ENCODE measurements at regions of chr11 and their contacts with region 1.

Region 1: DNA sequence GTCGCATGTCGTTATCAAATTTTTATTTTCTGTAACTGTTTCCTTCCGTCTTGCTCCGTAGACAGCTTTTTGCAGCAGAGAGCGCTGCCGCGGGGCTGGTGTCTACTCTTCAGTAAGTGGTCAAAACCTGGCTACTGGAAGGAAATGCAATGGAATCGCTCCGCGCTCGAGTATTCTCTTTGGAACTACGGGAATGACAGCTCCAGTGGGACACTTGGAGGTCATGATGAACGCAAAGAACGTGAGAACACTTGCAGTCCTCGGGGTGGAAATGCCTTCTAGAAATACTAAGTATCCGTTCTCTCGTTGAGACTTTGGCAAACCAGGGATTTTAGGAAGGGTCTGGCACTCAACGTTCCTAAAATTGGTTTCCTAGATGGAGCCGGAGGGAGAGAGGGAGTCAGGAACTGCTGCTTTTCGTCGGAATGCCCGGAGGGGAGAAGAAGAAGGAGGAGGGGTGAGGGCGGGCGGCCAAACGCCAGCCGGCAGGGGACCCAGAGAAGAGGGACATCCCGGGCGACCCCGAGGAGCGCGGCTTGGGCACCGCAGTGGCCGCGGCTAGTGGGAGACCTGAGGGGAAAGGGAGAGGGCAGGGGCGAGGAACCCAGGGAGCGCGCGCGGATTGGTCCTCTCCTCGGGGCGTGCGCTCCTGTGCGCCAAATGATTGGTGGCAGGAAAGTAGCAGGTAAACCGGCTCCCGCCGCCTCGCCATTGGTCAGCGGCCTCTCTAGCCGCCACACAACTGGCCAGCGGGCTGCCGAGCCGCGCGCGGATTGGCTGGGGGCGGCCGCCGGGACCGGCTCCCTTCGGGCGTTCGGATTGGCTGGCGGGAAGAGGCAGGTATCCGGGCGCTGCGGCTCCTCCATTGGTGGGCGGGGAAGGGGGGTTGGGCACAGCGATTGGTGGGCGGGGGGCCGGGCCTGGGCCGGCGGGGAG is 490 bp upstream of the BMAL1 start:
- DNase-seq: peak; percentile 98 to 99
- H3K4me3 ChIP-seq: peak overlapping the region; percentile 90
- H3K4me3 Mint-ChIP-seq: peak overlapping the region; percentile 89
- H3K27ac Mint-ChIP-seq: no peak overlapping the region
- H3K4me1 ChIP-seq: peaks cover 12% of the 10 kb centered on the region
- H3K4me1 Mint-ChIP-seq: peaks cover 7% of the 10 kb centered on the region
- H3K27me3 ChIP-seq: no peaks in the 10 kb centered on the region; the same call in 1 of the 2 replicates
- H3K27me3 Mint-ChIP-seq: peaks cover 32% of the 10 kb centered on the region
- CTCF ChIP-seq: no peak

Region 2: GRCh38 chr11:13189561-13190426 is 87.3 kb before region 1 on chr11:
- CTCF ChIA-PET with region 1: no interaction called
- POLR2A ChIA-PET with region 1: no interaction called
- intact Hi-C with region 1: no loop called
- DNase-seq: no peak
- H3K4me3 ChIP-seq: no peak overlapping the region
- H3K4me3 Mint-ChIP-seq: no peak overlapping the region
- H3K27ac Mint-ChIP-seq: no peak overlapping the region
- H3K4me1 ChIP-seq: no peaks in the 10 kb centered on the region
- H3K4me1 Mint-ChIP-seq: no peaks in the 10 kb centered on the region
- H3K27me3 ChIP-seq: no peaks in the 10 kb centered on the region
- H3K27me3 Mint-ChIP-seq: peaks cover 2% of the 10 kb centered on the region
- CTCF ChIP-seq: no peak

Region 3: GRCh38 chr11:13259374-13259773 is 17.7 kb before region 1 on chr11:
- CTCF ChIA-PET with region 1: no interaction called
- POLR2A ChIA-PET with region 1: no interaction called
- intact Hi-C with region 1: loop called (anchors 1 kb)
- DNase-seq: peak in 1 of 2 experiments; percentile 17
- H3K4me3 ChIP-seq: no peak overlapping the region
- H3K4me3 Mint-ChIP-seq: peak overlapping the region; percentile 46
- H3K27ac Mint-ChIP-seq: peak overlapping the region; percentile 3
- H3K4me1 ChIP-seq: peaks cover 37% of the 10 kb centered on the region
- H3K4me1 Mint-ChIP-seq: peaks cover 21% of the 10 kb centered on the region
- H3K27me3 ChIP-seq: no peaks in the 10 kb centered on the region
- H3K27me3 Mint-ChIP-seq: no peaks in the 10 kb centered on the region
- CTCF ChIP-seq: no peak

Region 4: DNA sequence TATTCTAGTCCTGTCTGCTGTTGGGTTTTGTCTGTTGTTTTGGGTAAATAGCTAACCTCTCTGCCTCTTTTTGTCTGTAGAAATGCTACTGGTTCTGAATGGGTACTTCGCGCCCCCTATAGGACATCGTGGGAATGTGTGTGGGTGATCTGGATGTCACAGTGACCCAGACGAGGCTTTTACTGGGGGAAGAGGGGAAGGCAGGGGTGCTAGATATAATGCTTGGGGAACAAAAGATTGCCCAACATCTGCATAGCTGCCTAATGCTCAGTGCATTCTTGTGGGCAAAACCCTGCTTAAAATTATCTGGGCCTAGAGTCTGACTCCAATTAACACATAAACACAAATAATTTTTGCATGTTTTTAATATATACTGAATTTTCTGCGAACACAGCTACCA is 58.2 kb after region 1 on chr11:
- CTCF ChIA-PET with region 1: no interaction called
- POLR2A ChIA-PET with region 1: interaction called, 3 read pairs
- intact Hi-C with region 1: loop called (anchors 5 kb)
- DNase-seq: peak; percentile 64 to 74
- H3K4me3 ChIP-seq: no peak overlapping the region
- H3K4me3 Mint-ChIP-seq: no peak overlapping the region
- H3K27ac Mint-ChIP-seq: no peak overlapping the region
- H3K4me1 ChIP-seq: peaks cover 25% of the 10 kb centered on the region
- H3K4me1 Mint-ChIP-seq: peaks cover 25% of the 10 kb centered on the region
- H3K27me3 ChIP-seq: no peaks in the 10 kb centered on the region
- H3K27me3 Mint-ChIP-seq: no peaks in the 10 kb centered on the region
- CTCF ChIP-seq: peak; percentile 74 to 78

Region 5: DNA sequence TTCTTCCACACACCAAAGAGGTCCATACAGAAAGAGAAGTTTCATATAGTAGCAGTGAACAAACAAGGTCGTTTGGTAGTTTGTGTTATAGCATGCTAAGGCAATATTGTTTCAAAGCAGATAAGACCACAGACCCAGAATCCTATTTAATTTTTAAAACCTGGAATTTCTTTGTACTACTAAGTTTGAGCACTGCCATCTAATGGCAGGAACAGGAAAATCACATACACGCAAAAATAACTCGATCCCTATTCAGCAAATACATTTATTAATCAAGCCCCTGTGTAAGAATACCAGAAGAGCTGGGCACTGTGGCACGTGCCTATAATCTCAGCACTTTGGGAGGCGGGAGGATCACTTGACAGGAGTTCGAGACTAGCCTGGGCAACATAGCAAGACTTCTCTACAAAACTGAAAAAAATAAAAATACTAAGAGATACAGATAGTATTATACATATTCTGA is 188.8 kb after region 1 on chr11:
- CTCF ChIA-PET with region 1: no interaction called
- POLR2A ChIA-PET with region 1: no interaction called
- intact Hi-C with region 1: no loop called
- DNase-seq: peak in 1 of 2 experiments; percentile 46
- H3K4me3 ChIP-seq: no peak overlapping the region
- H3K4me3 Mint-ChIP-seq: no peak overlapping the region
- H3K27ac Mint-ChIP-seq: no peak overlapping the region
- H3K4me1 ChIP-seq: peaks cover 47% of the 10 kb centered on the region
- H3K4me1 Mint-ChIP-seq: peaks cover 41% of the 10 kb centered on the region
- H3K27me3 ChIP-seq: no peaks in the 10 kb centered on the region
- H3K27me3 Mint-ChIP-seq: no peaks in the 10 kb centered on the region
- CTCF ChIP-seq: peak; percentile 62 to 65

Measured in Caco-2 (cell line).